ENCODE measurements at regions of chr2 and their contacts with region 1.

Region 1: GRCh38 chr2:39913648-39914461 is 134.8 kb upstream of the THUMPD2 start:
- DNase-seq: peak; percentile 45 to 63 (median 58)
- H3K4me3 ChIP-seq: no peak overlapping the region
- H3K4me3 Mint-ChIP-seq: no peak overlapping the region
- H3K27ac ChIP-seq: no peak overlapping the region
- H3K27ac Mint-ChIP-seq: no peak overlapping the region
- H3K4me1 ChIP-seq: peaks cover 0 to 4% of the 10 kb centered on the region in 2 donors
- H3K4me1 Mint-ChIP-seq: peaks cover 14% of the 10 kb centered on the region
- H3K27me3 ChIP-seq: no peaks in the 10 kb centered on the region
- H3K27me3 Mint-ChIP-seq: no peaks in the 10 kb centered on the region
- CTCF ChIP-seq: peak; percentile 88

Region 2: DNA sequence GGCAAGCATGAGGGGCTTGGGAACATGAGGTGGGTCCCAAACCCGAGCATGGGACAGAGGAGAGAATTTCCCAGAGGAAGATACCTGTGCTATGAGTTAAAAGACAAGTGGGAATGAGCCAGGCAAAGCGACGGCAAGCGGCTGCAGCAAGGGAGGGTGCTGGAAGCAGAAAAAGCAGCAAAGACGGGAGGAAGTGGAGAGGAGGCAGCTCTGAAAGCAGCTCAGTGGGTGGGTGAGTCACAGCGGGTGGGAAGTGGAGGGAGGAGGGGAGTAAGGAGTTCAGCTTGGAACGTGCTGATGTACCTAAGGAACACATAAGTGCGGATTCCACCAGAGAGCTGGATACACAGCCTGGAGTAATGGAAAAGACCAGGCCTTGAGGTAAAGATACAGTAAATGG is 176.2 kb before region 1 on chr2:
- intact Hi-C with region 1: no loop called
- DNase-seq: no peak
- H3K4me3 ChIP-seq: no peak overlapping the region
- H3K4me3 Mint-ChIP-seq: no peak overlapping the region
- H3K27ac ChIP-seq: no peak overlapping the region
- H3K27ac Mint-ChIP-seq: peak overlapping the region in 4 of 7 donors; percentile 40 to 70 (median 55)
- H3K4me1 ChIP-seq: no peaks in the 10 kb centered on the region
- H3K4me1 Mint-ChIP-seq: peaks cover 3% of the 10 kb centered on the region
- H3K27me3 ChIP-seq: no peaks in the 10 kb centered on the region
- H3K27me3 Mint-ChIP-seq: no peaks in the 10 kb centered on the region
- CTCF ChIP-seq: no peak

Region 3: GRCh38 chr2:39816845-39817244 is 97.0 kb before region 1 on chr2:
- intact Hi-C with region 1: no loop called
- DNase-seq: no peak
- H3K4me3 ChIP-seq: no peak overlapping the region
- H3K4me3 Mint-ChIP-seq: no peak overlapping the region
- H3K27ac ChIP-seq: no peak overlapping the region
- H3K27ac Mint-ChIP-seq: no peak overlapping the region
- H3K4me1 ChIP-seq: no peaks in the 10 kb centered on the region
- H3K4me1 Mint-ChIP-seq: no peaks in the 10 kb centered on the region
- H3K27me3 ChIP-seq: no peaks in the 10 kb centered on the region
- H3K27me3 Mint-ChIP-seq: no peaks in the 10 kb centered on the region
- CTCF ChIP-seq: no peak

Region 4: DNA sequence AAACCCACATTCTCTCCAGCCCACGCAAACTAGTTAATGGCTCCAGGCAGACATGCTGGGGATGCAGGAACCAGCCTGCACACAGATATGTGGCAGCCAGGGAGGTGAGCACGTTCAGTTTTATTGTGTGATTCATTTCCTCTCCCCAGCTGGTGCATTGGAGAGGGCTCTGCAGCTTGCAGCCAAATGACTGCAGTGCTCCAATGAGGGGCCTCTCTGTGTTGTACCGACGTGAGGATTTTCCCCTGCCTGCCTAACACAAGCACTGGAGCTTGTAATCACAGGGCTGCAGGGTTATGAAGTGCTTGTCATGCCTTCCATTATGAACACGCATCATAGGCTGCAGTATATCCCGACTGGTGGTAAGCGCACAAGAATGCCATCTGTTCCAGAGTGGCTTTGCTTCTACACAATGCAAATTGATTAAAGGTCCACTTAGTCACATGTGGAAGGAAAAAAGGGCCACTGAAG is 42.5 kb before region 1 on chr2:
- intact Hi-C with region 1: no loop called
- DNase-seq: no peak
- H3K4me3 ChIP-seq: no peak overlapping the region
- H3K4me3 Mint-ChIP-seq: no peak overlapping the region
- H3K27ac ChIP-seq: no peak overlapping the region
- H3K27ac Mint-ChIP-seq: no peak overlapping the region
- H3K4me1 ChIP-seq: no peaks in the 10 kb centered on the region
- H3K4me1 Mint-ChIP-seq: no peaks in the 10 kb centered on the region
- H3K27me3 ChIP-seq: no peaks in the 10 kb centered on the region
- H3K27me3 Mint-ChIP-seq: peaks cover 0 to 1% (median 0%) of the 10 kb centered on the region in 3 donors
- CTCF ChIP-seq: no peak

Region 5: DNA sequence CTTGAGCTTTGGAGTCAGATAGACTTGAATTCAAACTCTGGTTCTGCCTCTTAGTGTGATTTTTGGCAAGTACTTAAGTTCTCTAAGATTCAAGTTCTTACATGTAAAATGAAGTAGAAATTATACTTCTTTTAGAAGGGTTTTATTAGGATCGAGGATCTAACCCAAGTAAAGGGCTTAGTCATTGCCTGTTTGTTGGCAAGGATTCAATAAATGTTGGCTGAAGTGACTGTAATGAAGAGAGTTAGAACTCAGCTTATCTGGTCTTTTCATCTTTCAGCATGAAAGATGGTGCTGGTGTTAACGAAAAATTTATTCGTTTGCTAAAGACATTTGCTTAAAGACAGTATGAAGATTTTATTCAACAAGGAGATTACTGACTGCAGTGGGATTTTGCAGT is 181.1 kb after region 1 on chr2:
- intact Hi-C with region 1: no loop called
- DNase-seq: no peak
- H3K4me3 ChIP-seq: no peak overlapping the region
- H3K4me3 Mint-ChIP-seq: no peak overlapping the region
- H3K27ac ChIP-seq: no peak overlapping the region
- H3K27ac Mint-ChIP-seq: no peak overlapping the region
- H3K4me1 ChIP-seq: no peaks in the 10 kb centered on the region
- H3K4me1 Mint-ChIP-seq: no peaks in the 10 kb centered on the region
- H3K27me3 ChIP-seq: no peaks in the 10 kb centered on the region
- H3K27me3 Mint-ChIP-seq: no peaks in the 10 kb centered on the region
- CTCF ChIP-seq: no peak

Region 6: GRCh38 chr2:40760071-40760666 is 846.3 kb after region 1 on chr2:
- intact Hi-C with region 1: loop called in 1 of 2 experiments (anchors 5 kb)
- DNase-seq: peak; percentile 21 to 35 (median 26)
- H3K4me3 ChIP-seq: no peak overlapping the region
- H3K4me3 Mint-ChIP-seq: no peak overlapping the region
- H3K27ac ChIP-seq: no peak overlapping the region
- H3K27ac Mint-ChIP-seq: no peak overlapping the region
- H3K4me1 ChIP-seq: peaks cover 3 to 11% of the 10 kb centered on the region in 2 donors
- H3K4me1 Mint-ChIP-seq: peaks cover 21% of the 10 kb centered on the region
- H3K27me3 ChIP-seq: no peaks in the 10 kb centered on the region
- H3K27me3 Mint-ChIP-seq: peaks cover 0 to 3% (median 0%) of the 10 kb centered on the region in 3 donors
- CTCF ChIP-seq: peak; percentile 85

Region 7: GRCh38 chr2:41698678-41699422 is 1785.0 kb after region 1 on chr2:
- intact Hi-C with region 1: loop called in 1 of 2 experiments (anchors 10 kb)
- DNase-seq: no peak
- H3K4me3 ChIP-seq: no peak overlapping the region
- H3K4me3 Mint-ChIP-seq: peak overlapping the region; percentile 36 to 40
- H3K27ac ChIP-seq: no peak overlapping the region
- H3K27ac Mint-ChIP-seq: no peak overlapping the region
- H3K4me1 ChIP-seq: peaks cover 3 to 7% of the 10 kb centered on the region in 2 donors
- H3K4me1 Mint-ChIP-seq: peaks cover 12% of the 10 kb centered on the region
- H3K27me3 ChIP-seq: no peaks in the 10 kb centered on the region
- H3K27me3 Mint-ChIP-seq: peaks cover 3 to 4% (median 3%) of the 10 kb centered on the region in 3 donors
- CTCF ChIP-seq: peak; percentile 59

Region 8: GRCh38 chr2:41782306-41783158 is 1868.7 kb after region 1 on chr2:
- intact Hi-C with region 1: loop called (anchors 5 kb)
- DNase-seq: peak; percentile 1 to 25 (median 18)
- H3K4me3 ChIP-seq: no peak overlapping the region
- H3K4me3 Mint-ChIP-seq: no peak overlapping the region
- H3K27ac ChIP-seq: no peak overlapping the region
- H3K27ac Mint-ChIP-seq: peak overlapping the region in 1 of 7 donors; percentile 46
- H3K4me1 ChIP-seq: no peaks in the 10 kb centered on the region
- H3K4me1 Mint-ChIP-seq: no peaks in the 10 kb centered on the region
- H3K27me3 ChIP-seq: peaks cover 0 to 2% of the 10 kb centered on the region in 2 donors
- H3K27me3 Mint-ChIP-seq: peaks cover 0 to 7% (median 5%) of the 10 kb centered on the region in 3 donors
- CTCF ChIP-seq: peak; percentile 88